Naive thymus-derived CD8-positive, alpha-beta T cell (primary cell): ENCODE measurements at regions of chr4 and their contacts with region 1.

Region 1: DNA sequence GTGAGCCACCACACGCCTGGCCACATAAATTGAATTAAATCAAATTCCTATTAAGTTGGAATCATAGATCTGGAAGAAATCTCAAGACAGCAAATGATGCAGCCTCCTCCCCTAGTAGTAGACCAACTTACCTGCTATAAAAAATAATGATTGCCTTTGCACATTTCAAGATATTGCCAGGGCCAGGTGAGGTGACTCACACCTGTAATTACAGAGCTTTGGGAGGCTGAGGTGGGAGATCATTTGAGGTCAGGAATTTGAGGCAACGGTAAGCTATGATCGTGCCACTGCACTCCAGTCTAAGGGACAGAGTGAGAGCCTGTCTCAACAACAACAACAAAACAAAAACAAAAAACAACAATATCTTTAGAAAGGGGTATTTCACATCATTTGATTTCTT is 17.0 kb upstream of the WWC2 start:
- DNase-seq: no peak
- ATAC-seq: no peak
- H3K4me3 Mint-ChIP-seq: no peak overlapping the region
- H3K27ac Mint-ChIP-seq: no peak overlapping the region
- H3K4me1 Mint-ChIP-seq: no peaks in the 10 kb centered on the region
- H3K27me3 Mint-ChIP-seq: peaks cover 0 to 2% (median 0%) of the 10 kb centered on the region in 5 donors

Region 2: DNA sequence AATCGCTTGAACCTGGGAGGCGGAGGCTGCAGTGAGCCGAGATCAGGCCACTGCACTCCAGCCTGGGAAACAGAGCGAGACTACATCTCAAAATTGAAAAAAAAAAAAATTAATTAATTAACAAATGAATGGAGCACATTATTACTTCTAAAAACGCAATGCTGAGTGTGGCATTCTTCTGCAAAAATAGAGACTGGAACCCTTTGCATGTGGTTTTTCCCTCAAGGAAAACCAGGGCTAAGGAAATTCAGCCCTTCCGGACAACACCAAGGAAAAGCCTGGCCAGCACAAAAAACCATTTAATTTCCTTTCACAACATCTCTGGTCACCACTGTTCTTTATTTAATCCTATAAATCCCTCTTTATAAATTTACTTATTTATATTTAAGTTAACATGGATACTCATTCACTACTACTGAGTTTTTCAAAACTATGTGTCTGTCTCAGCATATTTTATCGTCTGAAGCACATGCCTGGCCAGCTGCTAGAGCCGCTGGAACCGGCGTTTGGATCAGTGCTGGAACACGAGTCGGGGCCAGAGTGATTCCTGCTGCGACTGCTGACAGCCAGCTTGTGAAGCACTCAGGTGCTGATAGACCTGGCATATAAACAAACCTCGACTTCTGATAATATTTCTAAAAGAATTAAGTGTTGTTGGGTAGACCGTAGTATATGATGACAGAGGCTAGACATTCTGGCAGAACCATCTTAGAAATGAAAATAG is 67.5 kb before region 1 on chr4:
- POLR2A ChIA-PET with region 1: no interaction called
- DNase-seq: no peak
- ATAC-seq: no peak
- H3K4me3 Mint-ChIP-seq: no peak overlapping the region
- H3K27ac Mint-ChIP-seq: no peak overlapping the region
- H3K4me1 Mint-ChIP-seq: no peaks in the 10 kb centered on the region
- H3K27me3 Mint-ChIP-seq: peaks cover 1 to 41% (median 16%) of the 10 kb centered on the region in 5 donors

Region 3: GRCh38 chr4:183030309-183030708 is 51.7 kb before region 1 on chr4:
- POLR2A ChIA-PET with region 1: no interaction called
- DNase-seq: no peak
- ATAC-seq: no peak
- H3K4me3 Mint-ChIP-seq: no peak overlapping the region
- H3K27ac Mint-ChIP-seq: no peak overlapping the region
- H3K4me1 Mint-ChIP-seq: no peaks in the 10 kb centered on the region
- H3K27me3 Mint-ChIP-seq: peaks cover 0 to 15% (median 1%) of the 10 kb centered on the region in 5 donors

Region 4: DNA sequence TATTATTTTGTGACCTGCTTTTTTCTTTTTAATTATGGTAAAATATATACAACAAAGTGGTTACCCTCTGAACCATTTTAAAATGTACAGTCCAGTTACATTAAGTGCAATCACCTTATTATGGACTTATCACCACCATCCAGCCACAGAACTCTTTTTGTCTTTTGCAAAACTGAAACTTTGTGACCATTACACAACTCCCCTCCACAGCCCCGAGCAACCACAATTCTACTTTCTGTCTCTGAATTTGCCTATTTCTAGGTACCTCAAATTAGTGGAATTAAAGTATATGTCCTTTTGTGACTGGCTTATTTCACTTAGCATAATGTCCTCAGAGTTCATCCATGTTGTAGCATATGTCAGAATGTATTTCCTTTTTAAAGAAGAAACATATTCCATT is 22.3 kb before region 1 on chr4:
- POLR2A ChIA-PET with region 1: no interaction called
- DNase-seq: no peak
- ATAC-seq: no peak
- H3K4me3 Mint-ChIP-seq: no peak overlapping the region
- H3K27ac Mint-ChIP-seq: no peak overlapping the region
- H3K4me1 Mint-ChIP-seq: no peaks in the 10 kb centered on the region
- H3K27me3 Mint-ChIP-seq: peaks cover 11 to 35% (median 22%) of the 10 kb centered on the region in 5 donors

Region 5: DNA sequence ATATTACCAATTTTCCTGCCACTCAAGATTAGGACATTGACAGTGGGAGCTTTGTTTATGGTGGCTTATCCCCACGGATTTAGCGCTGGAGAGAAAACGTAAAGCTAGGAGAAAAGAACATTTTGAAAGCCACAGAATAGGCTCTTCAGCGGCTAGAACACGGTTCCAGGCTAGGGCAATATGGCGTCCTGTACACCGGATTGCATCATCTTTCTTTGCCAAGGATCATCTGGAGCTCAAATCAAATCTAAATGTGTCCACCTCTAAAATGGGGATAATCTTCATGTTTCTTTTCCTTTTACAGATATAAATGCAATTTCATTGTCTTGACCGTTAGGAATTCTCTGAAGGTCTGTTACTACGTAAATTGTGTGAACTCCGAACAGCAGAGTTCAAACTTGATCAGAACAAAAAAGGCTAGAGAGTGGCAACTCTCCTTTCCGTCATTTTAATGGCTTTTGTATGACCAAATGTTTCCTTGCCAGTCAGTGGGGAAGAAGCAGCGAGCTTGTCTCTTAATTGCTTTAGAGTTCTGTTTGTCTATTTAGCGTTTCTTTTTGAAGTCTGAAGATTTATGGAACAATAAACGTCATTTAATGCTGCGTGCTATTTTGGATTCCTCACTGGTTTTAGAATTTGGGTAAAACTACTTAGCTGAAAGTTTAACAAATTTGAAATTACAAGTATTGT is 14.4 kb after region 1 on chr4:
- POLR2A ChIA-PET with region 1: interaction called, 10 read pairs
- DNase-seq: no peak
- ATAC-seq: no peak
- H3K4me3 Mint-ChIP-seq: peak overlapping the region in 6 of 10 donors; percentile 43 to 78 (median 70)
- H3K27ac Mint-ChIP-seq: no peak overlapping the region
- H3K4me1 Mint-ChIP-seq: peaks cover 2 to 18% (median 11%) of the 10 kb centered on the region in 4 donors
- H3K27me3 Mint-ChIP-seq: peaks cover 0 to 18% (median 0%) of the 10 kb centered on the region in 5 donors